AG04450 (cell line): ENCODE measurements at regions of chr1 and their contacts with region 1.

Region 1: DNA sequence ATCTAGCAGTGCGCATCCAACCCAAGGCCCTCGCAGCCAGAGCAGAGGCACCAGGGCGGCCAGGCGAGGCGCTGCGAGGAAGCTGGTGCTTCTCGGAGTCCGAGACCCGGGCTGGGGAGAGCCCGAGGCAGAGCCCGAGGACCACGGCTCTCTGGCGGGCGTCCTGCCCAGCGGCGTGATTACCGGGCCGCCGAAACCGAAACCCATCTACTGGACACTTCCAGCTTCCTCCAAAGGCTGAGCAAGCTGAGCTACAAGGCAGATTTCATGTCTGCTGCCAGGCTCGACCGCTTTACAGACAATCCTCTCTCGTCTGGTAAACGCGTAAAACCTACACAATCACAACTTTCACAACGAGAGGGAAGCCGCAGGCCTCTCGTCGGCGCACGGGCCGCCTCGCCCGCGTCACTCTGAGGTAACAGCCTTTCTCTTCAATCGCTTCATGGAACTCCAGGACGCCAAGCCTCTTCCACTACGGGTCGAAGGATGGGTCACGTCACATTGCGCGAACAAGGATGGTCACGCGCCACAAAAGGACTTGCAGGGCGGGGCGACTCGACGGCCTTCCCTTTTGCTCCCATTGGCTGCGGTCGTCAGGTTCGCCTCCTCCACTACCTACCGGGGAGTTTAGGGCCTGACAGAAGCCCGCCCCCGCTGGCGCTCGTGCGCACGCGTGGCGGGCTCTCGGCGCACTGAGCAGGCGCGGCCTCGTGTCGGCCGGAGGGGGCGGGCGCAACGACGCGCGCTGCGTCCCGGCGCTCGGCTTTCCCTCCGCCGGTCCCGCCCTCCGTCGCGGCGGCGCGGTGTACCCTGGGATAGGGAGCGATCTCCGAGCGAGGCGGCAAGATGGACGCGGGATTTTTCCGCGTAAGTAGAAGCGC is at the start of gene SRRM1:
- DNase-seq: peak; percentile 100
- H3K4me3 ChIP-seq: peak within 1 kb of the TSS; percentile 90
- H3K27ac ChIP-seq: peak within 1 kb of the TSS; percentile 100
- H3K27me3 ChIP-seq: peaks cover 3% of the 10 kb centered on the region
- CTCF ChIP-seq: peak; percentile 11; the same call in 1 of the 2 replicates
- polyA plus RNA-seq, gene SRRM1: 61.2 and 63.3 TPM in 2 replicates

Region 2: DNA sequence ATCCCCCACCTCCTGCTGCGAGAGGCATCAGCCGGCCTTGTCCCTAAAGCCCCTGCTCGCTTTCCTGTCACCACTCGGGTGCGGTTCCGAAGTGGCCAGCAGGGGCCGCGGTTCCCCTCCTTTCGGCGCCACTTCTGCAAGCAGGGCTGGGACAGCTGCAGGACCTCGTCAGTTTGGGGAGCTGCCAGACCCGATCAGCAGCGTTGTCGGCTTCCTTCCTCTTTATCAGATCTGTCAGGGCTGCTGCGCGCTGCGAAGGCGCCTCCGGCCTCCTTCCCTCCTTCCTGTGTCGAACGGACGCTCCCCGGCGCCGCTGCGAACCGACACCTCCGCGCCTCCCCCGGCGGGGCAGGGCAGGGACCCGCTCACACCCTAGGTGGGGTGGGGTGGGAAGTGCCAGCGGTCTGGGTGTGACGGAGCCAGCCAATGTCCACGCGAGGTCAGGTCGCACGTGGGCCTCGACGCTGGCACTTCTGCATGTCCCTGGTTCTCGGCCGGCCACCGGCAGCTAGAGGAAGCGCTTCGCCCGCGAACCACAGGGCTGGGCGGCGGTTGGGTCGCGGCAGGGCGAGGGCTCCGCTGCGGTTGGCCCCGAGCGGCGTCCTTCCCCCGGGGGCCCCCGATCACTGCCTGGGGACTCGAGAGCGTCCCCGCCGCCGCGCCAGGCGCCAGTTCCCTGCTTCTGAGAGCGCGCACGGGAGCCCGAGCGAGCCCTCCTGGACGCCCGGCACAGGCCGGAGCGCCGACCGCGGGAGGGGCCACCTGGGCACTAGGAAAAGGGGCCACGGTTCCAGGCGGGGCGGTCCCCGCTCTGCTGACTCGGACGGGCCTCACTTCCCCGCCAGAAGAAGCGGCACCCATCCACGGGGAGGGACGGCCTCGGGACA is 205.5 kb after region 1 on chr1:
- CTCF ChIA-PET with region 1: no interaction called
- POLR2A ChIA-PET with region 1: interaction called, 10 read pairs
- DNase-seq: peak; percentile 77
- H3K4me3 ChIP-seq: peak overlapping the region; percentile 50
- H3K27ac ChIP-seq: no peak overlapping the region
- H3K27me3 ChIP-seq: no peaks in the 10 kb centered on the region
- CTCF ChIP-seq: peak; percentile 88